Left ventricle myocardium inferior (tissue), 1 donor: ENCODE measurements at regions of chr1 and their contacts with region 1.

Region 1: DNA sequence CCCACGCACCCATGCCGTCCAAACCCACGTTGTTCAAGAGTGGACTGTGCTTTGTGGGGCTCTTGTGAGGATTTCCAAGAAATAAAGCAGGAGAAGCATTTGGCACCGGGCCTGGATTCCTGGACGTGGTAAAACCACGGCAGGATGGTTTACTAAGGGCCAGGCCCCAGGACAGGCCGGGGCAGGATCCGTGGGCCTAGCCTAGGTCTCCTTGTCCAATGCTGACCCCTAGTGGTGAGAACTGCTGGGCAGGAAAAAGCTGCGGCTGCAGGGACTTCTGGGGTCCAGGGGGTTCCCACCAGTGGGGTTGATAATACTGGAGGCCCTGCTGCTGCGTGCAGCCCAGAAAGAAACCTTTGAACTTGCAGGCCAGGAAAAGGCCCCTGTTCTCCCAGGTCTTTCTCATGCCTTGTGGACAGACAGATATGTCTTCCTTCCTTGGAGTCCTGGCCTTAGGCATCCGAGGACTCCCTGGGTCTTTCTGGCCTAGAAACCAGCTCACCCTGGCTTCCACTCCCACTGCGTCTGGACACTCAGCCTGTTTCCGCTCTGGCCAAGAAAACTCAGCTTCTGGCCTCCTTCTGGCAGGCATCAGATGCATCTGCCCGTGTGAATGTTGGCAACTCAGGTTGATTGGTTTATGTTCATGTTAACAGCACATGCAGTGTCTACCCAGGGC is 106.9 kb upstream of the TMEM51 start:
- DNase-seq: peak; percentile 57
- H3K4me3 ChIP-seq: no peak overlapping the region
- H3K27ac ChIP-seq: no peak overlapping the region
- H3K4me1 ChIP-seq: no peaks in the 10 kb centered on the region
- H3K27me3 ChIP-seq: no peaks in the 10 kb centered on the region
- CTCF ChIP-seq: peak; percentile 95

Region 2: GRCh38 chr1:14782741-14783591 is 263.7 kb before region 1 on chr1:
- intact Hi-C with region 1: loop called (anchors 10 kb)
- DNase-seq: no peak
- H3K4me3 ChIP-seq: no peak overlapping the region
- H3K27ac ChIP-seq: no peak overlapping the region
- H3K4me1 ChIP-seq: no peaks in the 10 kb centered on the region
- H3K27me3 ChIP-seq: peaks cover 33% of the 10 kb centered on the region
- CTCF ChIP-seq: no peak